Heart left ventricle (tissue), 16 donors: ENCODE measurements at regions of chr5 and their contacts with region 1.

Region 1: DNA sequence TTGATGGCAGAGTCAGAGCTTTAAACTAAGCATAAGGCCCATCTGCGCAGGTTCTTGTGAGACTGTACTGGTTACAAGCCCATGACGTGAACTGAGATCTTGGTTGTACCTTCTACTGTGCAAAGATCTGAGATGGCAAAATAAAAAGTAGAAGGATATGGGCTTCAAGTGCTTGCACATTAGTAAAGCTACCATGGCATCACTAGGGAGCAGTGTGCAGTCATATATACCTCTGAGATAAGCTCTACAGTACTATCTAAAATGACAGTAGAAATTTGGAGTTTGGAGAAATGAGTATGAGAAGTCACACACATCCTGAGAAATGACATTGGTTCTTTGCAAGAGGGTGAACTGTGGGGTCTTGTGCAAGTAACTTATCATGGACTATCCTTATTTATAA is 408.2 kb upstream of the PRR16 start:
- DNase-seq: no peak
- ATAC-seq: peak; percentile 37 to 82 (median 67)
- H3K4me3 ChIP-seq: no peak overlapping the region
- H3K27ac ChIP-seq: peak overlapping the region in 7 of 12 donors; percentile 1 to 75 (median 40)
- H3K4me1 ChIP-seq: peaks cover 0 to 36% (median 9%) of the 10 kb centered on the region in 12 donors
- H3K27me3 ChIP-seq: no peaks in the 10 kb centered on the region
- CTCF ChIP-seq: peak in 8 of 12 donors; percentile 7 to 51 (median 38)
- POLR2A ChIP-seq: no peak

Region 2: DNA sequence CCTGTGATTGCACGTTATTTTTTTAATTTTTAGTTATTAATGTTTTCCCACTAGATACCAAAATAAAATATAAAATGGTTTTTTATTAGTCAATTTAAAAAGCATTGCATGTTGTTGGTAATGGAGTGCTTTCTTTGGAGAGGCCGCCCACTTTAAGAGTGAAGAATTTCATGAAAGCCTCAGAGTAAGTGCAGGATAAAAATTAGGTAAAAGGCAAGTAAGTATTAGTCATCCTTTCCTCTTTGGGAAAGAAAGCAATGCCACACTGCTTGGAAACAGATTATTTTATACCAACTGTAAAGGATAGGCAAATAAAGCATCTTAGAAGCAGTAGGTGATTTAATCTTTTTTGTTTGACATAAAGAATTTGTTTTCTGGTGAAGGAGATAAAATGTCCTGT is 540.7 kb before region 1 on chr5:
- intact Hi-C with region 1: no loop called
- DNase-seq: no peak
- ATAC-seq: no peak
- H3K4me3 ChIP-seq: no peak overlapping the region
- H3K27ac ChIP-seq: no peak overlapping the region
- H3K4me1 ChIP-seq: no peaks in the 10 kb centered on the region
- H3K27me3 ChIP-seq: no peaks in the 10 kb centered on the region
- CTCF ChIP-seq: no peak
- POLR2A ChIP-seq: no peak

Region 3: DNA sequence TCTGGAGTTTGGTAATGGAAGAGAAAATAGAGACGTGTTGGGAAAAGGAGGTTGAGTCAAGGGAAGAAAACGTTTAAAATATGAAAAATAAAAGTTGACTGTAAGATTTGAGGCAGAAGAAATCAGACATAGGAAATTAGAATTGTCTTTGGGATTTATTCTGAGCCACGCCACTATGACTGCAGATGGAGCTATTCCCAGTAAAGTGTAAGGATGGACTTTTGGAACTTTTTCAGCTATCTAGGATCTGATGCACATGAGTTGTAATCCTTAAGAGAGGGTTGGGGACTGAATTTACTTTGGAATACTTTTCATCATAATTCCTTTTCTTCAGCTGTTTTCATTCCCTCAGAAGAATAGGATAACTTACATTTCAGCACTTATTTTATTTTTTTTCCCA is 89.8 kb before region 1 on chr5:
- intact Hi-C with region 1: loop called in 2 of 10 experiments (anchors 5 to 10 kb)
- DNase-seq: no peak
- ATAC-seq: peak in 3 of 4 donors; percentile 58 to 74 (median 67)
- H3K4me3 ChIP-seq: no peak overlapping the region
- H3K27ac ChIP-seq: peak overlapping the region in 3 of 12 donors; percentile 1 to 38 (median 37)
- H3K4me1 ChIP-seq: no peaks in the 10 kb centered on the region
- H3K27me3 ChIP-seq: no peaks in the 10 kb centered on the region
- CTCF ChIP-seq: peak in 7 of 12 donors; percentile 11 to 47 (median 39)
- POLR2A ChIP-seq: no peak

Region 4: GRCh38 chr5:120139039-120139438 is 83.2 kb after region 1 on chr5:
- intact Hi-C with region 1: loop called in 1 of 10 experiments (anchors 10 kb)
- DNase-seq: peak in 1 of 5 donors; percentile 13
- ATAC-seq: peak; percentile 67 to 88 (median 80)
- H3K4me3 ChIP-seq: no peak overlapping the region
- H3K27ac ChIP-seq: peak overlapping the region in 11 of 12 donors; percentile 42 to 87 (median 66)
- H3K4me1 ChIP-seq: peaks cover 0 to 34% (median 0%) of the 10 kb centered on the region in 12 donors
- H3K27me3 ChIP-seq: no peaks in the 10 kb centered on the region
- CTCF ChIP-seq: no peak
- POLR2A ChIP-seq: no peak

Region 5: DNA sequence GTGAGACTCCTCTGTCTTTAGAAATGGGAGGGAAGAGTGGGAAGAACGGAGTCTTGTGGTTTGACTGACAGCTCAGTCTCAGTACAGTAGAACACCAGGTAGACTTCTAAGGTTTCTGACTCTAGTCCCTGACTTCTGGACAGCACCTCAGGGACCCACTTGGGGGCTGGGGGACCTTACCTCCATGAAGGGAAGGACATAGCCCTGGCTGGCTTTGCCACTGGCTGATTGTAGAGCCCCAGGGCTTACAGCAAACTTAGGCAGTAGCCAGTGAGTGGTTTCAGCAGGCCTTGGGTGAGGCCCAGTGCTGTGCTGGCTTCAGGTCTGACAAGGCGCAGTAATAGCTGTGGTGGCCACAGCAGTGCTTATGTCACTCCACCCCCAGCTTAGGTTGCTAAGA is 118.2 kb after region 1 on chr5:
- intact Hi-C with region 1: no loop called
- DNase-seq: no peak
- ATAC-seq: no peak
- H3K4me3 ChIP-seq: no peak overlapping the region
- H3K27ac ChIP-seq: no peak overlapping the region
- H3K4me1 ChIP-seq: no peaks in the 10 kb centered on the region
- H3K27me3 ChIP-seq: no peaks in the 10 kb centered on the region
- CTCF ChIP-seq: no peak
- POLR2A ChIP-seq: no peak